H1 (cell line): ENCODE measurements at regions of chr10 and their contacts with region 1.

Region 1: GRCh38 chr10:122142641-122143237 is 128.4 kb upstream of the BTBD16 start:
- DNase-seq: peak in 1 of 2 experiments; percentile 99
- H3K4me3 ChIP-seq: no peak overlapping the region
- H3K27ac ChIP-seq: no peak overlapping the region
- H3K4me1 ChIP-seq: peaks cover 0 to 7% (median 3%) of the 10 kb centered on the region in 4 experiments; a peak in 5 of 7 replicates
- H3K27me3 ChIP-seq: no peaks in the 10 kb centered on the region
- CTCF ChIP-seq: peak; percentile 85 to 97 (median 91)
- EP300 ChIP-seq: peak in 1 of 2 experiments; percentile 19; a peak in 1 of 3 replicates
- POLR2A ChIP-seq: no peak
- RAD21 ChIP-seq: peak; percentile 93 to 95

Region 2: DNA sequence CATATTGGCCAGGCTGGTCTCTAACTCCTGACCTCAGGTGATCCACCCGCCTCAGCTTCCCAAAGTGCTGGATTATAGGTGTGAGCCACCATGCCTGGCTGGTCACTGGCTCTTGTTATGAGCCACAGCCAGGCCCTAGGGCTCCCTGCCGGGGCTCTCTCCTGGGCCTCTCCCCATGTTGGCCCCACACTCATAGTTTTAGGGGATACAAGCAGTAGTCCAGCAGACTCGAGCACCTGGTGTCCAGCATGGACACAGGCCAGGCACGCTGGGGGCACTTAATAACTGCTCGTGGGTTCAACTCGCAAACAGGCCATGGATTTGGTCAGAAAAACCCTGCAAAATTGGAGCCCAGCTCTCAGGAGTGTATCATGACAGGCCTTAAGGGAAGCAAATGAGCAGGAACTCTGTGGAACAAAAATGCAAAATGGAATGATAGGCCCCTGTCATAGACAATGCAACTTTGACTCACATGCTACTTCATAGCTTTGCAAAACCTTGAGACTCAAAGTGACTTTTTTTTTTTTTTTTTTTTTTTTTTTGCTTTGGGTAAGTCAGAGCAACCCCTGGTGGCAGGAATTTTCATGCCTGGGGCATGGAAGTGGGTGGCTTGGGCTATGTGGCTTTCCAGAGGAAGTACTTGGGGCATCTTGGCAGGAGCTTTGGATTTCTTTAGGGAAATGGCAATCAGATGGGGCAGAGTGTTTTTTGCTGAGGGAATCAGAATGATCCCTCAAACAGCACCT is 91.3 kb before region 1 on chr10:
- CTCF ChIA-PET with region 1: interaction called, 14 read pairs
- POLR2A ChIA-PET with region 1: no interaction called
- DNase-seq: peak in 1 of 2 experiments; percentile 68
- H3K4me3 ChIP-seq: no peak overlapping the region
- H3K27ac ChIP-seq: no peak overlapping the region
- H3K4me1 ChIP-seq: peaks cover 0 to 9% (median 4%) of the 10 kb centered on the region in 4 experiments; a peak in 5 of 7 replicates
- H3K27me3 ChIP-seq: no peaks in the 10 kb centered on the region
- CTCF ChIP-seq: peak; percentile 63 to 83 (median 72)
- EP300 ChIP-seq: 0 out of 3 replicates have a peak, but pooled peaks of 1 of the 2 experiments have one; percentile 28
- POLR2A ChIP-seq: no peak
- RAD21 ChIP-seq: peak; percentile 45 to 66; a peak in 3 of 4 replicates

Region 3: GRCh38 chr10:122132331-122132755 is 10.4 kb before region 1 on chr10:
- CTCF ChIA-PET with region 1: interaction called, 17 read pairs
- POLR2A ChIA-PET with region 1: interaction called, 4 read pairs
- DNase-seq: peak in 1 of 2 experiments; percentile 74
- H3K4me3 ChIP-seq: peak overlapping the region in 1 of 4 experiments; percentile 26; a peak in 1 of 8 replicates
- H3K27ac ChIP-seq: 0 out of 2 replicates have a peak overlapping the region, but pooled peaks have one; percentile 2
- H3K4me1 ChIP-seq: peaks cover 3 to 13% (median 8%) of the 10 kb centered on the region in 4 experiments
- H3K27me3 ChIP-seq: no peaks in the 10 kb centered on the region
- CTCF ChIP-seq: no peak
- EP300 ChIP-seq: no peak
- POLR2A ChIP-seq: no peak
- RAD21 ChIP-seq: no peak

Region 4: DNA sequence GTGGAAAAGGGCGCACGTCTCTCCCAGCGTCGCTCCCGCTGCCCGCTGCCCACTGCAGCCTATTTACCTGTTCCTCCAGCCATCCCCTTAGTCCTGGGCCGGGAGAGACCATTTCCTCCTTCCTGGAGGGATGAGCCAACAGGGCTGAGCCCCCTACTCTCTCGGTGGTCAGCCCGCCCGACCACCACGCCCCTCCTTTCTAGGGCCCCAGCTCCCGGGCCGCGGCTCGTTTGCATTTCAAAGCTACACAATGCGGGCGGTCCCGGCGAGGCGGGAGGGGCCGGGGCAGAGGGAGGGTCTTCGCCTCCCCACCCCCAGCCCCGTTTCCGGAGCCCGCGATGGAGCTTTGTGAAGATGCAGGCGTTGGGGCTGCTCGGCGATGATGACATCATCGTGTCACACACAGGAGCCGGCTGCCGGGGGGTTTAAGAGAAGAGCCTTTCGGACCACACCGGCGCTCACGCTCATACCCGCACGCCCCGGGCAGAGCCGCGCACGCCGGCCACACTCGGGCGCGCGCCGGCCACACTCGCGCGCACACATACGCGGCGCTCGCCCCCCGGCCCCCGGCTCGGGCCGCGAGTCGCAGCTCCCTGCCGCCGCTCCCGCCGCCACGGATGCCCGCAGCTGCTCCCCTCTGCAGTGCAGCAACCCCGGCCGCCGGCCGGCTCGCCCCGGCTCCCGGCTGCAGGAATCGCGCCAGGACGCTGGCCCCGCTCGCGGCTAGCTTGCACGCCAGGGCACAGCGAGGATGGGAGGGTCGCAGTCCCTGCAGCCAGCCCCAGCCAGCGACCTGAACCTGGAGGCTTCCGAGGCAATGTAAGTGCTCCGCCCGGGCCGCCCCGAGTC is 20.7 kb after region 1 on chr10:
- CTCF ChIA-PET with region 1: interaction called, 65 read pairs
- POLR2A ChIA-PET with region 1: interaction called, 9 read pairs
- DNase-seq: peak; percentile 84 to 91
- H3K4me3 ChIP-seq: peak overlapping the region; percentile 73 to 87 (median 84)
- H3K27ac ChIP-seq: peak overlapping the region; percentile 84
- H3K4me1 ChIP-seq: peaks cover 11 to 47% (median 28%) of the 10 kb centered on the region in 4 experiments
- H3K27me3 ChIP-seq: peaks cover 0 to 2% (median 0%) of the 10 kb centered on the region in 4 experiments; a peak in 1 of 7 replicates
- CTCF ChIP-seq: no peak
- EP300 ChIP-seq: peak; percentile 71 to 99
- POLR2A ChIP-seq: peak; percentile 87 to 90
- RAD21 ChIP-seq: no peak

Region 5: GRCh38 chr10:122199070-122199469 is 56.3 kb after region 1 on chr10:
- CTCF ChIA-PET with region 1: interaction called, 12 read pairs
- POLR2A ChIA-PET with region 1: no interaction called
- DNase-seq: no peak
- H3K4me3 ChIP-seq: no peak overlapping the region
- H3K27ac ChIP-seq: no peak overlapping the region
- H3K4me1 ChIP-seq: 0 out of 7 replicates have a peak, but pooled peaks cover 0 to 3% (median 0%) of the 10 kb centered on the region in 4 experiments
- H3K27me3 ChIP-seq: no peaks in the 10 kb centered on the region
- CTCF ChIP-seq: no peak
- EP300 ChIP-seq: no peak
- POLR2A ChIP-seq: no peak
- RAD21 ChIP-seq: no peak

Region 6: GRCh38 chr10:122221958-122222357 is 79.2 kb after region 1 on chr10:
- CTCF ChIA-PET with region 1: interaction called, 12 read pairs
- POLR2A ChIA-PET with region 1: interaction called, 3 read pairs
- DNase-seq: no peak
- H3K4me3 ChIP-seq: no peak overlapping the region
- H3K27ac ChIP-seq: no peak overlapping the region
- H3K4me1 ChIP-seq: no peaks in the 10 kb centered on the region
- H3K27me3 ChIP-seq: no peaks in the 10 kb centered on the region
- CTCF ChIP-seq: no peak
- EP300 ChIP-seq: no peak
- POLR2A ChIP-seq: no peak
- RAD21 ChIP-seq: no peak